MCF 10A (cell line): ENCODE measurements at regions of chr16 and their contacts with region 1.

Region 1: GRCh38 chr16:68528686-68529379 is 10.3 kb upstream of the ZFP90 start:
- DNase-seq: peak; percentile 89
- H3K4me3 Mint-ChIP-seq: peak overlapping the region; percentile 85
- H3K27ac Mint-ChIP-seq: peak overlapping the region; percentile 85
- H3K4me1 Mint-ChIP-seq: peaks cover 6% of the 10 kb centered on the region
- H3K27me3 Mint-ChIP-seq: no peaks in the 10 kb centered on the region
- CTCF ChIP-seq: peak; percentile 90

Region 2: DNA sequence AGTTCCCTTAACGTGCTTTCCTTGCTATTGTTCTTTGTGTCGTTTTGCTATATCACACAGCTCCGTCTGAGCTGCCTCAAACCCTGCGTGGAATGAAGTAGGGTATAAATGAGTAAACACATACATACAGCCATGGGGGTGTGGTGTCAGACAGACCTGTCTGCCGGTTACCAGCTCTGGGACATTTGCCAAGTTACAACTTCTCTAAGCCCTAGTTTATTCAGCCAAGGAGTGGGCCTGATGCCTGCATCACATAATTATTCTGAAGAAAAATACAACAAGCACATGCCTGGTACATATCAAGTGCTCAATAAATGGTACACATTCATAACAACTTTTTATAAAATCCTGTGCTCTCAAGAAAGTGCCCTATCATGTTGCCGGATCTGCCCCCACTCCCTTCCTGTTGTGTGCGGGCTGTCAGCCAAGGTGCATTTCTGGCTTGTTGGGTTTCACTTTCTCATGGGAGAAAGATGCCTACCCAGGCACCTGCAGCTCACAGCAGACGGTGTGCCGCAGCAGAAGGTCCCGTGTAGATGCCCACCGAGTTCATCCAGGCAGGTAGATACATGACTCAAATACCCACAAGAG is 111.0 kb before region 1 on chr16:
- CTCF ChIA-PET with region 1: no interaction called
- POLR2A ChIA-PET with region 1: no interaction called
- intact Hi-C with region 1: no loop called
- DNase-seq: peak; percentile 79
- H3K4me3 Mint-ChIP-seq: no peak overlapping the region
- H3K27ac Mint-ChIP-seq: no peak overlapping the region
- H3K4me1 Mint-ChIP-seq: peaks cover 10% of the 10 kb centered on the region
- H3K27me3 Mint-ChIP-seq: no peaks in the 10 kb centered on the region
- CTCF ChIP-seq: no peak

Region 3: GRCh38 chr16:68538880-68539701 is 10.3 kb after region 1 on chr16 and contains the start of gene ZFP90:
- CTCF ChIA-PET with region 1: interaction called, 14 read pairs
- POLR2A ChIA-PET with region 1: interaction called, 17 read pairs
- intact Hi-C with region 1: no loop called
- DNase-seq: peak; percentile 76
- H3K4me3 Mint-ChIP-seq: peak within 1 kb of the TSS; percentile 86
- H3K27ac Mint-ChIP-seq: peak within 1 kb of the TSS; percentile 81
- H3K4me1 Mint-ChIP-seq: peaks cover 10% of the 10 kb centered on the region
- H3K27me3 Mint-ChIP-seq: no peaks in the 10 kb centered on the region
- CTCF ChIP-seq: no peak
- total RNA-seq, gene ZFP90: 25.5 and 29.3 TPM in 2 replicates

Region 4: GRCh38 chr16:68644715-68645493 is 116.1 kb after region 1 on chr16 and contains the start of gene CDH3:
- CTCF ChIA-PET with region 1: interaction called, 13 read pairs
- POLR2A ChIA-PET with region 1: interaction called, 3 read pairs
- intact Hi-C with region 1: no loop called
- DNase-seq: peak; percentile 88
- H3K4me3 Mint-ChIP-seq: peak within 1 kb of the TSS; percentile 89
- H3K27ac Mint-ChIP-seq: peak within 1 kb of the TSS; percentile 75
- H3K4me1 Mint-ChIP-seq: peaks cover 21% of the 10 kb centered on the region
- H3K27me3 Mint-ChIP-seq: no peaks in the 10 kb centered on the region
- CTCF ChIP-seq: no peak
- total RNA-seq, gene CDH3: 74.4 and 107 TPM in 2 replicates

Region 5: DNA sequence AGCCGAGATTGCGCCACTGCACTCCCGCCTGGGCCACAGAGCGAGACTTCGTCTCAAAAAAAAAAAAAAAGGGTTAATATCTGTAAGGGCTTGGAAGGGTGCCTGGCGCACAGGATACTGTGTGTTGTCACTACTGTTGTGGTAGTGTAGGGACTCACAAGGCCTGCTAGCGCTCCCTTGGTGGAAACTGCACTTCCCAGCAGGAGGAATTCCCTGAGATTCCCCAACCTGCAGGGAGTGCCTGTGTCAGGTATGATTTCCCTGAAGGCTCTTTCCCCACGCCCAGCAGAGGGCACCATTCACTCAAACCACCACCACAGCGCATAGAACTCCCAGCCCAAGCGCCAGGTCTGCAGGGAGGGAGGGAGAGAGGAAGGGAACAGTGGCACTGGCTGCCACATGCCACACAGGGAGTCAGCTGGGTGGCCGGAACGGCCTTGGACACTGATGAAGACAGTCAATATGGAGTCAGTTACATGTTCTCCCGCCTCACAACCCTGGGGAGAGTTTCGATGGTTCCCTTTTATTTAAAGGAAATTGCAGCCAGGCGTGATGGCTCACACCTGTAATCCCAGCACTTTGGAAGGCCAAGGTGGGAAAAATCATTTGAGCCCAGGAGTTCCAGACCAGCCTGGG is 175.5 kb after region 1 on chr16:
- CTCF ChIA-PET with region 1: interaction called, 9 read pairs
- POLR2A ChIA-PET with region 1: interaction called, 3 read pairs
- intact Hi-C with region 1: loop called (anchors 1 kb)
- DNase-seq: peak; percentile 92
- H3K4me3 Mint-ChIP-seq: no peak overlapping the region
- H3K27ac Mint-ChIP-seq: no peak overlapping the region
- H3K4me1 Mint-ChIP-seq: peaks cover 20% of the 10 kb centered on the region
- H3K27me3 Mint-ChIP-seq: no peaks in the 10 kb centered on the region
- CTCF ChIP-seq: peak; percentile 81

Region 6: GRCh38 chr16:68800257-68800875 is 271.5 kb after region 1 on chr16:
- CTCF ChIA-PET with region 1: interaction called, 25 read pairs
- POLR2A ChIA-PET with region 1: interaction called, 5 read pairs
- intact Hi-C with region 1: loop called (anchors 1 kb)
- DNase-seq: peak; percentile 83
- H3K4me3 Mint-ChIP-seq: no peak overlapping the region
- H3K27ac Mint-ChIP-seq: no peak overlapping the region
- H3K4me1 Mint-ChIP-seq: peaks cover 21% of the 10 kb centered on the region
- H3K27me3 Mint-ChIP-seq: no peaks in the 10 kb centered on the region
- CTCF ChIP-seq: peak; percentile 73

Region 7: GRCh38 chr16:68843482-68844210 is 314.8 kb after region 1 on chr16 and contains the start of gene TANGO6:
- CTCF ChIA-PET with region 1: interaction called, 7 read pairs
- POLR2A ChIA-PET with region 1: interaction called, 6 read pairs
- intact Hi-C with region 1: loop called (anchors 2 kb)
- DNase-seq: peak; percentile 79
- H3K4me3 Mint-ChIP-seq: peak within 1 kb of the TSS; percentile 82
- H3K27ac Mint-ChIP-seq: peak within 1 kb of the TSS; percentile 82
- H3K4me1 Mint-ChIP-seq: peaks cover 10% of the 10 kb centered on the region
- H3K27me3 Mint-ChIP-seq: no peaks in the 10 kb centered on the region
- CTCF ChIP-seq: no peak
- total RNA-seq, gene TANGO6: 14.6 and 21.8 TPM in 2 replicates

Region 8: GRCh38 chr16:68902008-68902968 is 373.5 kb after region 1 on chr16:
- CTCF ChIA-PET with region 1: interaction called, 4 read pairs
- POLR2A ChIA-PET with region 1: no interaction called
- intact Hi-C with region 1: loop called (anchors 1 kb)
- DNase-seq: peak; percentile 81
- H3K4me3 Mint-ChIP-seq: no peak overlapping the region
- H3K27ac Mint-ChIP-seq: no peak overlapping the region
- H3K4me1 Mint-ChIP-seq: no peaks in the 10 kb centered on the region
- H3K27me3 Mint-ChIP-seq: no peaks in the 10 kb centered on the region
- CTCF ChIP-seq: peak; percentile 76